PC-9 (cell line): ENCODE measurements at regions of chr10 and their contacts with region 1.

Region 1: DNA sequence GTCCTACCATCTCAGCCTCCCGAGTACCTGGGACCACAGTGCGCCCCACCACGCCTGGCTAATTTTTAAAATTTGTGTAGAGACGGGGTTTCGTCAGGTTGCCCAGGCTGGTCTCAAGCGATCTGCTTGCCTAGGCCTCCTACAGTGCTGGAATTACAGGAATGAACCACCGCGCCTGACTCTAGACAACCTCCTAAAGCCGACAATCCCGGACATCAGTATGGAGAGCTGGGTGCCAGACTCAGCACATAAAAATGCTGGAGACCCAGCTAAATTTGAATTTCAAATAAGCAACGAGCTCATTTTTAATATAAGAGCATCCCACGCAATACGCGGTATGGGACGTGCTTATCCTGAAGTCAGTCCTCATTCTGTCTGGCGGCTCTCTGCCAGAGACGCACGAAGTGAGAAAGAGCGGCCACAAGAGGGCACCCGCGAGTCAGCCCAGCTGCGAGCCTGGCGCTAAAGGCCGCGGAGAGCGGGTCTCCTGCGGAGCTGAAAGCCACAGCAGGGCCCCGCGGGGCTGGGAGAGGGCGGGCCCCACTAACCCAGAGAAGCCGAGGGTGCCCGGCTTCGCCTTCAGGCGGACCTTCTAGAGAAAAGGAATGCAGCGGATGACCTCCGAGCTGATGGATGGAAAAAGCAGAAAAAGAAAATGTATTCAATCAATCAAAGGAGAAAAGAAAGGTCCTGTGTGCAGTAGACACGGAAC is 7.0 kb downstream of the CALY start:
- DNase-seq: peak; percentile 54 to 73
- H3K4me3 ChIP-seq: peak overlapping the region; percentile 45; the same call in 1 of the 2 replicates
- H3K27ac ChIP-seq: no peak overlapping the region
- H3K4me1 ChIP-seq: no peaks in the 10 kb centered on the region
- H3K27me3 ChIP-seq: peaks cover 15% of the 10 kb centered on the region
- CTCF ChIP-seq: peak; percentile 90

Region 2: GRCh38 chr10:132904181-132904819 is 425.3 kb before region 1 on chr10:
- CTCF ChIA-PET with region 1: no interaction called
- POLR2A ChIA-PET with region 1: no interaction called
- intact Hi-C with region 1: loop called (anchors 10 kb)
- DNase-seq: peak in 1 of 2 experiments; percentile 59
- H3K4me3 ChIP-seq: no peak overlapping the region
- H3K27ac ChIP-seq: no peak overlapping the region
- H3K4me1 ChIP-seq: no peaks in the 10 kb centered on the region
- H3K27me3 ChIP-seq: peaks cover 22% of the 10 kb centered on the region; the same call in 1 of the 2 replicates
- CTCF ChIP-seq: peak; percentile 75

Region 3: GRCh38 chr10:133394064-133394663 is 64.5 kb after region 1 on chr10 and contains the start of gene MTG1:
- CTCF ChIA-PET with region 1: no interaction called
- POLR2A ChIA-PET with region 1: no interaction called
- intact Hi-C with region 1: loop called (anchors 10 kb)
- DNase-seq: peak; percentile 70 to 91
- H3K4me3 ChIP-seq: peak within 1 kb of the TSS; percentile 97
- H3K27ac ChIP-seq: peak within 1 kb of the TSS; percentile 84
- H3K4me1 ChIP-seq: peaks cover 7% of the 10 kb centered on the region; the same call in 1 of the 2 replicates
- H3K27me3 ChIP-seq: no peaks in the 10 kb centered on the region
- CTCF ChIP-seq: no peak
- total RNA-seq, gene MTG1: 33.0 and 45.9 TPM in 2 replicates

Region 4: DNA sequence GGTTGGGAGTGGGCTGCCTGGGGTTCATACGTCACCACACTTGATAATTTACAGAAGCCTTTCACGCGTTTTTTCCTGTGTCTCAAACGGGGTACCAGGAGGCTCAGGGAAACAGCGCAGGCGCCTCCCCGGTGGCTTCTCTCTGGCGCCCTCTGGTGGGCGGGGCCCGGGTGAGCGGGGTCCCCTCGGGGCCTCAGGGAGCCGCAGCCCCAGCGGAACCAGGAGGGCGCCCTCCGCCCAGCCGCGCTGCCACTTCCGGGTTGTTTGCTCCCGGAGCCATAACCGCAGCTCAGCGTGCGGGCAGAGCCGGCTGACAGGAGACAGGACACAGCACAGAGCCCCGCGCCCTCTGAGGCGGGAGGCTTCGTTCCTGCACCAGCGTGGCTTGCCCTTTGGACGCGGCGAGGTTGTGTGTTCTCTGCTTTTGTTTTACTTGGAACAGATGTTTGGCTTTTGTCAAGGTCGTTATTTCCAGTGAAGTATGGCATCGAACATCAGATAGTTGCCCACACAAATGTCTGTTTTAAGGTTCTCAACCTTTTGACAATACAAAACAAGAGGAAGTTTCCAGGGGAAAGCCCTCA is 190.6 kb after region 1 on chr10:
- CTCF ChIA-PET with region 1: no interaction called
- POLR2A ChIA-PET with region 1: no interaction called
- intact Hi-C with region 1: loop called (anchors 10 kb)
- DNase-seq: peak in 1 of 2 experiments; percentile 83
- H3K4me3 ChIP-seq: no peak overlapping the region; the same call in 1 of the 2 replicates
- H3K27ac ChIP-seq: no peak overlapping the region
- H3K4me1 ChIP-seq: 0 out of 2 replicates have a peak, but pooled peaks cover 4% of the 10 kb centered on the region
- H3K27me3 ChIP-seq: no peaks in the 10 kb centered on the region
- CTCF ChIP-seq: peak; percentile 64